Activated CD8-positive, alpha-beta T cell treated with anti-CD3 and anti-CD28 coated beads for 36 hours (primary cell): ENCODE measurements at regions of chr6 and their contacts with region 1.

Region 1: DNA sequence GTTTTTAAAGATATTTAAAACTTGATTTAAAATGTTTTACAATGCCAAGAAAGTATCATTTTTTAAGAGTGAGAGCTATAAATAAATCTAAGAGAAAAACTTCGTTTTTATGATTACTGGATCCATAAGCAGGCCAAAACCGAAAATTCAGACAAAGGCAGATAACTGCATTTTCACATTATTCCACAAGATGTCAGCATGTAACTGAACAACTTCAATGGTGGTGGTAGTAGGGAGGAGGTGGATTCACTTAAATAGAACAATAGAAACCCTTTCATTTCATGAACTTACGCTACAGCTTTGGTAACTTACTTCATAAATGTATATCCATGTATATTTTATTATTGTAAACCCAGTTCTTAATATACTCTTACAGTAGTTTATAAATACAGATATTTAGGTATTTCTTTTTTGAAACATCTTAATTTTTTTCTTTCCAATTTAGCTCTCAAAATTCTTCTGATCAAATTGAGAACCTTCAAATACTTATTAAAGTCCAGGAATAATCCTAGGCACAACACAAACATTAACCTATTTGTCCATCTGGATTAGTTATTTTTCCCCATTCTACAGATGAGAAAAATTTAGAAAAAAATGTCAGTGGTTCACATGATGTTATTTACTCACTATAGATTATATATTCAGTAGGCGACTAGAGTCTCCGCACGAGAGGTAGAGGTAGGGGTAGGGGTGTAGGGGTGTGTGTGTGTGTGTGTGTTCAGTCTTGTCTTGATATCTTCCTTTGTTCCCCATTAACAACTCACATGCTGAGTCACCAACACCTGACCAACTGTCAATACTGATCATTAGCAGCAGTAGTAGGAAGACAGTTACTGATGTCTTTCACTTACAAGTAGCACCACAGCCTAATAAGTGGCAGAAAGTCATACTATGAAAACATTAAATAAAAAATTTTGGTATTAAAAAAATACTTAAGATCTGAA is 111.5 kb downstream of the ARHGAP18 start:
- DNase-seq: no peak
- ATAC-seq: peak; percentile 84
- H3K4me3 Mint-ChIP-seq: no peak overlapping the region
- H3K27ac Mint-ChIP-seq: no peak overlapping the region
- H3K4me1 Mint-ChIP-seq: peaks cover 2% of the 10 kb centered on the region
- H3K27me3 Mint-ChIP-seq: no peaks in the 10 kb centered on the region
- CTCF ChIP-seq: peak; percentile 80

Region 2: GRCh38 chr6:129448965-129449364 is 149.6 kb before region 1 on chr6:
- CTCF ChIA-PET with region 1: no interaction called
- POLR2A ChIA-PET with region 1: no interaction called
- intact Hi-C with region 1: no loop called
- DNase-seq: no peak
- ATAC-seq: peak; percentile 84
- H3K4me3 Mint-ChIP-seq: no peak overlapping the region
- H3K27ac Mint-ChIP-seq: peak overlapping the region; percentile 75
- H3K4me1 Mint-ChIP-seq: peaks cover 85% of the 10 kb centered on the region
- H3K27me3 Mint-ChIP-seq: no peaks in the 10 kb centered on the region
- CTCF ChIP-seq: no peak

Region 3: GRCh38 chr6:129485746-129486145 is 112.8 kb before region 1 on chr6:
- CTCF ChIA-PET with region 1: no interaction called
- POLR2A ChIA-PET with region 1: no interaction called
- intact Hi-C with region 1: no loop called
- DNase-seq: no peak
- ATAC-seq: no peak
- H3K4me3 Mint-ChIP-seq: no peak overlapping the region
- H3K27ac Mint-ChIP-seq: peak overlapping the region; percentile 7
- H3K4me1 Mint-ChIP-seq: peaks cover 31% of the 10 kb centered on the region
- H3K27me3 Mint-ChIP-seq: no peaks in the 10 kb centered on the region
- CTCF ChIP-seq: no peak

Region 4: DNA sequence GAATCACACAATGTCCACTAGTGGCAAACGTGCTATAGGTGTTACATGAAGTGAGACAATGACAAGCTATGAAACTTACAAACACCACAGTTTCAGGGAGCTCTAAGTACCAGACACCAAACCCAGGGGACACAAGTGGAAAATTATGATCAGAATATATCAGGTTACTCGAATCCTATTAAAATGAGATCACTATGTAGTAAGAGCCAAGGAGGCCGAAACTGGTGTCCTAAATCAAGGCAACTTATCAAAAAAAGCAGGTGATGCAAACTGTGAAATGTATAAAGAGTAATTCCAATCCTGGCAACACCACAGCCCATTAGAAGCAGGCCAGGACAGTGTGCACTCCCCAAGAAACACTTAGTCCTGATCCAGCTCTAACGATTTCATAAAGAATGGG is 11.1 kb after region 1 on chr6:
- CTCF ChIA-PET with region 1: interaction called, 16 read pairs
- POLR2A ChIA-PET with region 1: no interaction called
- intact Hi-C with region 1: no loop called
- DNase-seq: no peak
- ATAC-seq: no peak
- H3K4me3 Mint-ChIP-seq: no peak overlapping the region
- H3K27ac Mint-ChIP-seq: no peak overlapping the region
- H3K4me1 Mint-ChIP-seq: peaks cover 2% of the 10 kb centered on the region
- H3K27me3 Mint-ChIP-seq: no peaks in the 10 kb centered on the region
- CTCF ChIP-seq: no peak

Region 5: GRCh38 chr6:129709769-129710449 is 111.4 kb after region 1 on chr6 and contains the start of gene ARHGAP18:
- CTCF ChIA-PET with region 1: interaction called, 12 read pairs
- POLR2A ChIA-PET with region 1: no interaction called
- intact Hi-C with region 1: no loop called
- DNase-seq: peak; percentile 82
- ATAC-seq: peak; percentile 97
- H3K4me3 Mint-ChIP-seq: peak within 1 kb of the TSS; percentile 92
- H3K27ac Mint-ChIP-seq: peak within 1 kb of the TSS; percentile 80
- H3K4me1 Mint-ChIP-seq: peaks cover 37% of the 10 kb centered on the region
- H3K27me3 Mint-ChIP-seq: peaks cover 7% of the 10 kb centered on the region
- CTCF ChIP-seq: no peak
- total RNA-seq, gene ARHGAP18: 8.2 to 9.6 TPM

Region 6: GRCh38 chr6:129736105-129736504 is 137.6 kb after region 1 on chr6:
- CTCF ChIA-PET with region 1: interaction called, 204 read pairs
- POLR2A ChIA-PET with region 1: interaction called, 3 read pairs
- intact Hi-C with region 1: no loop called
- DNase-seq: no peak
- ATAC-seq: no peak
- H3K4me3 Mint-ChIP-seq: no peak overlapping the region
- H3K27ac Mint-ChIP-seq: no peak overlapping the region
- H3K4me1 Mint-ChIP-seq: peaks cover 6% of the 10 kb centered on the region
- H3K27me3 Mint-ChIP-seq: no peaks in the 10 kb centered on the region
- CTCF ChIP-seq: no peak

Region 7: GRCh38 chr6:129766959-129767728 is 168.6 kb after region 1 on chr6:
- CTCF ChIA-PET with region 1: interaction called, 32 read pairs
- POLR2A ChIA-PET with region 1: no interaction called
- intact Hi-C with region 1: no loop called
- DNase-seq: peak; percentile 82
- ATAC-seq: peak; percentile 93
- H3K4me3 Mint-ChIP-seq: peak overlapping the region; percentile 70
- H3K27ac Mint-ChIP-seq: no peak overlapping the region
- H3K4me1 Mint-ChIP-seq: peaks cover 9% of the 10 kb centered on the region
- H3K27me3 Mint-ChIP-seq: peaks cover 23% of the 10 kb centered on the region
- CTCF ChIP-seq: no peak